HCT116 (cell line): ENCODE measurements at regions of chr3 and their contacts with region 1.

Region 1: DNA sequence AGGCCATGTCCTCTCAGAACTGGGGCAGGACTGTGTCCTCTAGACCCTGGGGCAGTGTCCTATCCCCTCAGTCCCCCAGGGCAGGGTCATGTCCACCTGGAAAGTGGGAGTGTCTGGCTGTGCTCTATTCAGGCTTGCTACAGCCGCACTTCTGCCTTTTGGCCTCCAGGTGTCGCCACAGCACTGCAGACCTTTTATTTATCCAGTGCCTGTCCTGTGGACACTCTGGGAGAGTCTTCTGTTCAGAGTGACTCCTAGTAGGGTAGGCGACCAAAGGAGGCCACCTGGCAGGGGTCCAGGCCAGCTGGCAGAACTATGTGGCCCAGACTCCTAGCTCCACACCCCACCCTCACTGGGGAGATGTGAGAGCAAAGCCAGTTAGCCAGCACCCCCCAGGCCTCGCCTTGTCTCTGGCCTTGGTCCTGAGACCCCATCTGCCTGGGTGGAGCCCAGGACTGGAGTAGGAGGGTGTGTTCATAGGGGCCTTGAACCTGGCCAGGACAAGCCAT is 3.9 kb downstream of the TMIE start:
- DNase-seq: no peak
- ATAC-seq: peak; percentile 92
- H3K4me3 ChIP-seq: no peak overlapping the region
- H3K27ac ChIP-seq: no peak overlapping the region
- H3K4me1 ChIP-seq: peaks cover 7 to 15% of the 10 kb centered on the region in 2 experiments; a peak in 3 of 4 replicates
- H3K27me3 ChIP-seq: no peaks in the 10 kb centered on the region
- CTCF ChIP-seq: peak; percentile 94 to 96 (median 94)
- POLR2A ChIP-seq: no peak
- RAD21 ChIP-seq: peak; percentile 98

Region 2: DNA sequence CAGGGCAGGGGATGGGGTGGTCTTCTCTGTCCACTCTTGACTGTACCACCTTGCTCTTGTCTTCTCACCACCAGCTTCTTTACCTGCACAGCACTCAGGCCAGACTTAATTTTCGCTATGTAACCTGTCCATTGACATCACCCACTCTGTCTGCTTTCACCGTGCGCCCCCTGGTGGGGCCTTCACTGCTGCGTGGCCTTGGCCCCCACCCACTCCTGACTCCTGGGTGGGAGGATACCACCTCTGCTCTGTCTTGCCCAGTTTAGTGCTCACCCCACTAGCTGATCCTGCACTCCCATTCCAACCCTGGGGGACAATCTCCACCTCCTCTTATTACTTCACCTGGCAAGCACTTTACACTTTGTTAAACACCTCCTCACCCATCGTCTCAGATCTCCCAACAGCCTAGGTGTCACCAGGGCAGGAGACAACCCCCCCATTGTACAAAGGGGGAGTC is 190.2 kb after region 1 on chr3:
- CTCF ChIA-PET with region 1: interaction called, 4 read pairs
- POLR2A ChIA-PET with region 1: no interaction called
- RAD21 ChIA-PET with region 1: no interaction called
- intact Hi-C with region 1: loop called (anchors 1 kb)
- DNase-seq: peak; percentile 37
- ATAC-seq: peak; percentile 67
- H3K4me3 ChIP-seq: no peak overlapping the region
- H3K27ac ChIP-seq: no peak overlapping the region
- H3K4me1 ChIP-seq: peaks cover 0 to 13% of the 10 kb centered on the region in 2 experiments; a peak in 2 of 4 replicates
- H3K27me3 ChIP-seq: no peaks in the 10 kb centered on the region
- CTCF ChIP-seq: peak; percentile 90 to 95 (median 92)
- POLR2A ChIP-seq: no peak
- RAD21 ChIP-seq: peak; percentile 88

Region 3: GRCh38 chr3:46909535-46910442 is 204.7 kb after region 1 on chr3:
- CTCF ChIA-PET with region 1: interaction called, 11 read pairs
- POLR2A ChIA-PET with region 1: interaction called, 4 read pairs
- RAD21 ChIA-PET with region 1: interaction called in 1 of 2 experiments, 3 read pairs
- intact Hi-C with region 1: loop called (anchors 1 kb)
- DNase-seq: peak; percentile 51
- ATAC-seq: peak; percentile 92
- H3K4me3 ChIP-seq: no peak overlapping the region
- H3K27ac ChIP-seq: no peak overlapping the region
- H3K4me1 ChIP-seq: peaks cover 3 to 17% of the 10 kb centered on the region in 2 experiments; a peak in 3 of 4 replicates
- H3K27me3 ChIP-seq: no peaks in the 10 kb centered on the region
- CTCF ChIP-seq: peak; percentile 84 to 95 (median 89)
- POLR2A ChIP-seq: no peak
- RAD21 ChIP-seq: peak; percentile 95

Region 4: DNA sequence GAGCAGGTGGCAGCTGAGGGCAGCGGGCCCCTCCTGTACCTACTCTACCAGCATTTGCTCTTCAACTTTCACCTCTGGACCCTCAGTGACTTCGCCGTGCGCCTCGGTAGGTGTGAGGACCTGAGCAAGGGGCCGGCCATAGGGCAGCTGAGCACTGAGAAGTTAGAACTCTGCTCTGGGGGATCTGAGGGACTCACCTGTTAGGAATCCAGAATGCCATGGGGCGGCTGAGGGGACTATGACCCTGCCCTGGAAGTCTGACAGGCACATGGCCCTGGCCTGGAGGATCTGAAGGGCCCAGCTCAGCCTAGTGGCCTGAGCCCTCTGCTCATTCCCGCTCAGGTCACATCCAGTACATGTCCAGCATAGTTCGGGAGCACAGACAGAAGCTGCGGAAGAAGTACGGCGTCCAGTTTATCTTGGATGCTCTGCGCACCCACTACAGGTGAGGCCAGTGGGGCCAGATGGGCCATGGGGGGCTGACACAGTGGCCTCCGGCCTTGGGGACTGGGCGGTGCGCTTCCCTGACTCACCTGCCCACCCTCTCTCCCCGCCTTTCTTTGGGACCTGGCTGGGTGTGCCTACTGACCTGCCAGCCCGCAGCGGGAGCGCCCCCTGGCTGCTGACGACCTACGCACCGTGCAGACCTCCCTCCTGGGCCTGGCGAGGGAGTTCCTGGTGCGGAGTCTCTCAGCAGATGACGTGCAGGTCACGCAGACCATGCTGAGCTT is 293.2 kb after region 1 on chr3:
- CTCF ChIA-PET with region 1: no interaction called
- POLR2A ChIA-PET with region 1: no interaction called
- RAD21 ChIA-PET with region 1: no interaction called
- intact Hi-C with region 1: loop called (anchors 1 kb)
- DNase-seq: peak; percentile 59
- ATAC-seq: peak; percentile 89
- H3K4me3 ChIP-seq: no peak overlapping the region
- H3K27ac ChIP-seq: peak overlapping the region; percentile 15; the same call in 1 of the 2 replicates
- H3K4me1 ChIP-seq: peaks cover 0 to 15% of the 10 kb centered on the region in 2 experiments; a peak in 1 of 4 replicates
- H3K27me3 ChIP-seq: no peaks in the 10 kb centered on the region
- CTCF ChIP-seq: peak; percentile 85 to 92 (median 90)
- POLR2A ChIP-seq: no peak
- RAD21 ChIP-seq: peak; percentile 97

Region 5: GRCh38 chr3:47324278-47324865 is 619.3 kb after region 1 on chr3:
- CTCF ChIA-PET with region 1: no interaction called
- POLR2A ChIA-PET with region 1: no interaction called
- RAD21 ChIA-PET with region 1: no interaction called
- intact Hi-C with region 1: loop called (anchors 1 kb)
- DNase-seq: peak; percentile 48
- ATAC-seq: peak; percentile 79
- H3K4me3 ChIP-seq: no peak overlapping the region
- H3K27ac ChIP-seq: 0 out of 2 replicates have a peak overlapping the region, but pooled peaks have one; percentile 15
- H3K4me1 ChIP-seq: peaks cover 8 to 20% of the 10 kb centered on the region in 2 experiments
- H3K27me3 ChIP-seq: no peaks in the 10 kb centered on the region
- CTCF ChIP-seq: peak; percentile 69 to 85 (median 81)
- POLR2A ChIP-seq: no peak
- RAD21 ChIP-seq: peak; percentile 85

Region 6: GRCh38 chr3:47370887-47371697 is 666.0 kb after region 1 on chr3:
- CTCF ChIA-PET with region 1: no interaction called
- POLR2A ChIA-PET with region 1: no interaction called
- RAD21 ChIA-PET with region 1: interaction called in 1 of 2 experiments, 3 read pairs
- intact Hi-C with region 1: loop called (anchors 1 kb)
- DNase-seq: no peak
- ATAC-seq: peak; percentile 79
- H3K4me3 ChIP-seq: no peak overlapping the region
- H3K27ac ChIP-seq: no peak overlapping the region
- H3K4me1 ChIP-seq: no peaks in the 10 kb centered on the region
- H3K27me3 ChIP-seq: no peaks in the 10 kb centered on the region
- CTCF ChIP-seq: no peak
- POLR2A ChIP-seq: no peak
- RAD21 ChIP-seq: peak; percentile 51

Region 7: GRCh38 chr3:47781685-47782445 is 1076.8 kb after region 1 on chr3 and contains the start of gene SMARCC1:
- CTCF ChIA-PET with region 1: no interaction called
- POLR2A ChIA-PET with region 1: no interaction called
- RAD21 ChIA-PET with region 1: no interaction called
- intact Hi-C with region 1: loop called (anchors 10 kb)
- DNase-seq: peak; percentile 93
- ATAC-seq: peak; percentile 92
- H3K4me3 ChIP-seq: peak within 1 kb of the TSS; percentile 89 to 99
- H3K27ac ChIP-seq: peak within 1 kb of the TSS; percentile 97
- H3K4me1 ChIP-seq: peaks cover 11 to 18% of the 10 kb centered on the region in 2 experiments
- H3K27me3 ChIP-seq: no peaks in the 10 kb centered on the region
- CTCF ChIP-seq: no peak
- POLR2A ChIP-seq: peak; percentile 94
- RAD21 ChIP-seq: no peak
- total RNA-seq, gene SMARCC1: 168 TPM